ENCODE measurements at regions of chr12 and their contacts with region 1.

Region 1: DNA sequence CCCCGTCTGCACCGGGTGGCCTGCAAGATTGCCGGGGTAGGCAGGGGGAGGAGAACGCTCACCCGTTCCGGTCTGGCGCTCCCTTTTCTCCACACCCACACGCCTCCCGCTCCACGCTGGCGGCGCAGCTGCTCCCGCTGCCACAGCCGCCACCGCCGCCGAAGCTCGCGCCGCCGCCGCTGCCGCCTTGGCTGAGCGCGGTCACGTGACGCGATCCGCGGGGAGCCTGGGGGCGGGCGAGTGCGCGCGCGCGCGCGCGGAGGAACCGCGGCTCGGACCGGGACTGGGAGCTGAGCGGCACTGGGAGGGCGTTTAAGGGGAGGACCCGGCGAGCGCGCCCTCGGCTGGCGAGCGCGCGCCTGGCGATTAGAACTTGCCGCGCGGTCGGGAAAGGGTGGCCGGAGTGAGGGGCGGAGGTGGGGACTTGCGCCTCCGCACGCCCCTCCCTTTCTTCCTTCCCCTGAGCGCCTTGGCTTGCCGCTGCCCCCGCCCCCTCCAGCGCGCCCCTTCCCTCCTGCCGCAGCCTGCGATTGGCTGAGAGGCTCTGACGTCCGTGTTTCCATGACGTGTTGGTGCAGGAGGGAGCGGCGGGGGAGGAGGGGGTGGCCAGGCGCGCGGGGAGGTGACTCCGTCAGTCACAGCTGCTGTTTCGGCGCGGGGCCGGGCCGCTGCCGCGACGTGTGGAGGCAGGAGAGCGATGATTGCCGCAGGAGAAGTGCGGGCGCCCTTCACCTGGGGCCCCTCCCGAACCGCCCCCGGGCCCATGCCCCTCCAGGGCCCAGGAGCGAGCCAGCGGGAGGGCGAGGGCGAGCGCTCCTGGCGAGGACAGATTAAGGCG is 738 bp upstream of the ATP2B1 start:
- DNase-seq: peak; percentile 98 to 99
- H3K4me3 ChIP-seq: peak overlapping the region; percentile 98
- H3K4me3 Mint-ChIP-seq: peak overlapping the region; percentile 79
- H3K27ac Mint-ChIP-seq: peak overlapping the region; percentile 91
- H3K4me1 ChIP-seq: peaks cover 11% of the 10 kb centered on the region; the same call in 1 of the 2 replicates
- H3K4me1 Mint-ChIP-seq: peaks cover 18% of the 10 kb centered on the region
- H3K27me3 ChIP-seq: no peaks in the 10 kb centered on the region
- H3K27me3 Mint-ChIP-seq: no peaks in the 10 kb centered on the region
- CTCF ChIP-seq: no peak

Region 2: DNA sequence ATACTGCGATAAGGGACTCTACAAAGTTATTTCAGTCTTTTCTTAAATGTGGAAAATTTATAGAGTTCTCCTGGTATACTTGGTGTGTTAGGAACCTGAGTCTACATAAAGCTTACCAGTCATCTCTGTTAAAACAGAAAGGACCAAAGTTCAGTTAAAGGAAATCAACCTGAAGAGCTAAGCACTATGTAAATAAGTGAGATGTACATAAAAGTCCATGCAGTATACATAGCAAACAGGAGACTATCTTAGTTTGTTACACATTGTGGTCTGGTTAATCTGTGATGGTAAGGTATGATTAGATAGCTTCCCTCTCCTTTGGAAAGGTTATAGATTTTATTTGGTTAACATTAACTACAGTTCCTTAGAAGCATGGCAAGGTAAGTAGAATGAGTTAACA is 76.6 kb before region 1 on chr12:
- CTCF ChIA-PET with region 1: no interaction called
- POLR2A ChIA-PET with region 1: no interaction called
- intact Hi-C with region 1: loop called (anchors 2 kb)
- DNase-seq: peak in 1 of 2 experiments; percentile 49
- H3K4me3 ChIP-seq: no peak overlapping the region
- H3K4me3 Mint-ChIP-seq: no peak overlapping the region
- H3K27ac Mint-ChIP-seq: no peak overlapping the region
- H3K4me1 ChIP-seq: peaks cover 33% of the 10 kb centered on the region
- H3K4me1 Mint-ChIP-seq: peaks cover 32% of the 10 kb centered on the region
- H3K27me3 ChIP-seq: no peaks in the 10 kb centered on the region
- H3K27me3 Mint-ChIP-seq: no peaks in the 10 kb centered on the region
- CTCF ChIP-seq: no peak

Region 3: DNA sequence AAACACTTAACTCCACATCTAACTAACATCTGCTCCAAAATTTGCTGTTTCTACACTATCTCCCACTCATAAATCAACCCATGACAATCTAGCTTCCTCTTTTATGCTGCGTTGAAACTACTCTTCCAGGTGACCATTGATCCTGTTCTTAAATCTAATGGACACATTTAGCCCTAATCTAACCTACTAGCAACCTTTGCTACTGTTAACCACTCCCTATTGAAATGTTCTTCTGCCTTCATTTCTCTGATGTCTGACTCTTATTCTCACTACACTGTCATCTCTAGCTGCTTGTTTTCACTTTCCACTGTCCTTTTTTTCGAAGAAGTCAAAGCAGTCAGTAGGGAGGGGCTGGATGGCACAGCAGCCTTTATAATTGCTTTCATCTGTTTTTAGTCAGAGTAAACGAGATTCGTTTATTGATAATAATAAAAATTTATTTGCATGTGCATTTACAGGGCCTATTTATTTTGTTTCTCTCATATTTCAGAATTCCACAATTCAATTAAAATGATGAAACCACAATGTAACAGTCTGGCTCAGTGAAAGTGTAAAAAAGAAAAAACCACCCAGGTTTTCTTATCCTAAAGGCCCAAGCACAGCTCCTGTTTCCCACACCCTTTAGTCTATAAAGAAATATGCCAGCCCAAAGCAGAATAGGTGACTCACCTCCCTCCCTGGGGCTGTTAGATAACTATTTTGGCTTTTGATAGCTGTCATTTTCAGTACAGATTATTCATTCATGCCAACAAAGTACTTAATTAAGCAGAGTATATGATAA is 45.6 kb before region 1 on chr12:
- CTCF ChIA-PET with region 1: no interaction called
- POLR2A ChIA-PET with region 1: no interaction called
- intact Hi-C with region 1: loop called (anchors 5 kb)
- DNase-seq: no peak
- H3K4me3 ChIP-seq: no peak overlapping the region
- H3K4me3 Mint-ChIP-seq: no peak overlapping the region
- H3K27ac Mint-ChIP-seq: peak overlapping the region; percentile 8
- H3K4me1 ChIP-seq: peaks cover 36% of the 10 kb centered on the region
- H3K4me1 Mint-ChIP-seq: peaks cover 38% of the 10 kb centered on the region
- H3K27me3 ChIP-seq: no peaks in the 10 kb centered on the region
- H3K27me3 Mint-ChIP-seq: no peaks in the 10 kb centered on the region
- CTCF ChIP-seq: no peak

Region 4: GRCh38 chr12:89825591-89826449 is 116.4 kb after region 1 on chr12:
- CTCF ChIA-PET with region 1: no interaction called
- POLR2A ChIA-PET with region 1: no interaction called
- intact Hi-C with region 1: loop called (anchors 1 kb)
- DNase-seq: no peak
- H3K4me3 ChIP-seq: no peak overlapping the region
- H3K4me3 Mint-ChIP-seq: peak overlapping the region; percentile 17
- H3K27ac Mint-ChIP-seq: peak overlapping the region; percentile 16
- H3K4me1 ChIP-seq: peaks cover 62% of the 10 kb centered on the region
- H3K4me1 Mint-ChIP-seq: peaks cover 48% of the 10 kb centered on the region
- H3K27me3 ChIP-seq: no peaks in the 10 kb centered on the region
- H3K27me3 Mint-ChIP-seq: no peaks in the 10 kb centered on the region
- CTCF ChIP-seq: no peak

Region 5: DNA sequence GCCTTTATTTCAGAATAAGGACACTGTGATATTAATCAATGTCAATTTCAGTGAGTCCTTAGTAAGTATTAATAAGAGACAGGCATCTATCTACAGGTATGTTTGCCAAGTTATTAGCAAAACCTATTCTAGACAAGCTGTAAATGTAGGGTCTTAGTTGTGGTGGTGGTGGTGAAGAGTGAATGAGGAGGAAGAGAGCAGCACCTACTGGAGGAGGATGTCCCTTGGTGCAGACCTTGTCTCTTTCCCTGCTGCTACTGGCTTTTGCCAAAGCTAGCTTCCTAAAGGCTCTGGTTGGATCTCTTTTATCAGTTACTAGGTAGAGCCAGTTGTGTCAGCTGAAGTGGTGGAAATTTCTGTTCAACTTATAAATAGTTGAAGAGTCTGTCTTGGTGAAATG is 304.0 kb after region 1 on chr12:
- CTCF ChIA-PET with region 1: no interaction called
- POLR2A ChIA-PET with region 1: no interaction called
- intact Hi-C with region 1: loop called (anchors 2 kb)
- DNase-seq: peak; percentile 23 to 42
- H3K4me3 ChIP-seq: no peak overlapping the region
- H3K4me3 Mint-ChIP-seq: no peak overlapping the region
- H3K27ac Mint-ChIP-seq: no peak overlapping the region
- H3K4me1 ChIP-seq: no peaks in the 10 kb centered on the region
- H3K4me1 Mint-ChIP-seq: no peaks in the 10 kb centered on the region
- H3K27me3 ChIP-seq: no peaks in the 10 kb centered on the region
- H3K27me3 Mint-ChIP-seq: no peaks in the 10 kb centered on the region
- CTCF ChIP-seq: no peak